K562 (cell line): ENCODE measurements at regions of chr2 and their contacts with region 1.

Region 1: GRCh38 chr2:157261199-157261783 is 3.8 kb downstream of the GALNT5 start:
- DNase-seq: peak; percentile 96 to 99 (median 98)
- ATAC-seq: peak; percentile 64
- H3K4me3 ChIP-seq: peak overlapping the region; percentile 53
- H3K27ac ChIP-seq: peak overlapping the region; percentile 94
- H3K4me1 ChIP-seq: peaks cover 7 to 37% of the 10 kb centered on the region in 2 experiments; a peak in 4 of 5 replicates
- H3K27me3 ChIP-seq: no peaks in the 10 kb centered on the region
- CTCF ChIP-seq: no peak
- EP300 ChIP-seq: peak; percentile 98
- POLR2A ChIP-seq: peak; percentile 90
- RAD21 ChIP-seq: peak; percentile 16 to 41; a peak in 3 of 4 replicates

Region 2: DNA sequence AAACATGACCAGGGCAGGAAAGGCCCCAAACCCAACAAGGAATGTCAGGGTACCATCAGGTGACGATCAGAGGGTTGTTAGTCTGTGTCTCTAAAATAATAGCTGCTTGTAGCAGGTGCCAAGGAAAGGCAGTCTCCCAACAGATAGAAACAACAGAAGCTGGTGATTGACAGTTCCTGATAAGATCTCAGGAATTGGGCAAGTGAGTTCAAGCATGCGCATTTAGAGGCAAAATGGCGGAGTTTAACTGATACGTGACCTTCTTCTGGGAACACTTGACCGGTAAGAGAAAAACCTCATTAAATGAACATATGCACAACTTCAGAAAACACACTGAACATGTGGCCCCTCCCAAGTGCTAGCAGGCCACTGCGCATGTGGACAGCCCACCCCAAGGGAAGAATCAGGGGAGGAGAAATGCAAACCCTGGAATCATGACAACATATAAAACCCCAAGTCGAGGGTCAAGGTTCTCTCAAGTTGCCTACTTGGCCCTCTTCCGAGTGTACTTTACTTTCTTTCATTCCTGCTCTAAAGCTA is 1897.9 kb before region 1 on chr2:
- CTCF ChIA-PET with region 1: no interaction called
- POLR2A ChIA-PET with region 1: no interaction called
- in situ Hi-C with region 1: no loop called
- intact Hi-C with region 1: loop called (anchors 5 kb)
- DNase-seq: peak; percentile 21 to 83 (median 40)
- ATAC-seq: peak; percentile 59
- H3K4me3 ChIP-seq: peak overlapping the region; percentile 30
- H3K27ac ChIP-seq: peak overlapping the region; percentile 85
- H3K4me1 ChIP-seq: peaks cover 0 to 3% of the 10 kb centered on the region in 2 experiments; a peak in 1 of 5 replicates
- H3K27me3 ChIP-seq: no peaks in the 10 kb centered on the region
- CTCF ChIP-seq: no peak
- EP300 ChIP-seq: no peak
- POLR2A ChIP-seq: 0 out of 2 replicates have a peak, but pooled peaks have one; percentile 23
- RAD21 ChIP-seq: no peak

Region 3: GRCh38 chr2:157221394-157221988 is 39.8 kb before region 1 on chr2:
- CTCF ChIA-PET with region 1: no interaction called
- POLR2A ChIA-PET with region 1: interaction called, 8 read pairs
- in situ Hi-C with region 1: no loop called
- intact Hi-C with region 1: loop called (anchors 1 kb)
- DNase-seq: peak; percentile 32 to 89 (median 58)
- ATAC-seq: peak; percentile 85
- H3K4me3 ChIP-seq: no peak overlapping the region
- H3K27ac ChIP-seq: peak overlapping the region; percentile 89
- H3K4me1 ChIP-seq: peaks cover 0 to 26% of the 10 kb centered on the region in 2 experiments; a peak in 2 of 5 replicates
- H3K27me3 ChIP-seq: no peaks in the 10 kb centered on the region
- CTCF ChIP-seq: no peak
- EP300 ChIP-seq: peak; percentile 98
- POLR2A ChIP-seq: peak; percentile 39; the same call in 1 of the 2 replicates
- RAD21 ChIP-seq: peak; percentile 13 to 28; a peak in 2 of 4 replicates

Region 4: DNA sequence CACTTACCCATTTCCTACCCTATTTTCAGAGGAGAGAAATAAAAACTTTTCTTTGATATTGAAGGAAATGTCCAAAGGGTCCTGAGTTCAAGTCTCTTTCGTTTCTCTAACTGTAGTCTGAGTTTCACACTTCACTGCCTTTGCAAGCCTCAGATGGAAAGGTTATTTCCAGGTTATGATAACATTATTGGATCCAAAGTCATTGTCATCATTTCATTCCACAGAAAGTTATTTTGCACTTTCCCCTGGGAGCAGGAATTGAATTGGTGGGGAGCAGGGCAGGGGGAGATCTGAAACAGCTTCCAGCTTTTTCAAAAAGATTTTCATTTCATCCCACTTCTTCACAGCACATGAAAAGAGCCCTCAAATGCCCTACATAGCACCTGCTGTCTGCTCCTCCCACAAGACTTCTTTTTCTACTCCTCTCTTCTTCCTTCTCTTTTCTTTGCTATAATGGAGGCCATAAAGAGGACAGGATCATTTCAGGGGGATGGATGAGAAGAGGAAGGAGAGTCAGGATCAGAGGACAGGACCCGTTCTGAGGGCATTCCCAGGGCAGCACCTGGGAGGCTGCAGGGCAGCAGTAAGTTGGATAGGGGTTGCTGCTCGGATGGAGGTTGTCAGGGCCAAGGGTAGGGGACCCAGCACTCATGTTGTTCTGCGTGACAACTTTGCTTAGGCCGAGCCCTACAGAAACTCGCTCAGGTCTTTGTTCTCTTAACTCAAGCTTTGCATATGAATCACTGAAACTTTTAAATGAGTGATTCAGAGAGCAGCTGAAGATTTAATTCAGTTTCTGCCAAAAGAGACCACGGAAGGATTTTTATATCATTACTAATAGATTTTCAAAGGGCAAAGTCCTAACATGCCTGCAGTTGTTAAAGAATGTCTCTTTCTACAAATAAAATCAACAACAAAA is 15.2 kb before region 1 on chr2:
- CTCF ChIA-PET with region 1: no interaction called
- POLR2A ChIA-PET with region 1: interaction called, 28 read pairs
- in situ Hi-C with region 1: no loop called
- intact Hi-C with region 1: no loop called
- DNase-seq: no peak
- ATAC-seq: peak; percentile 20
- H3K4me3 ChIP-seq: no peak overlapping the region
- H3K27ac ChIP-seq: no peak overlapping the region
- H3K4me1 ChIP-seq: peaks cover 0 to 16% of the 10 kb centered on the region in 2 experiments; a peak in 2 of 5 replicates
- H3K27me3 ChIP-seq: no peaks in the 10 kb centered on the region
- CTCF ChIP-seq: no peak
- EP300 ChIP-seq: no peak
- POLR2A ChIP-seq: no peak
- RAD21 ChIP-seq: no peak